ENCODE measurements at regions of chr14 and their contacts with region 1.

Region 1: DNA sequence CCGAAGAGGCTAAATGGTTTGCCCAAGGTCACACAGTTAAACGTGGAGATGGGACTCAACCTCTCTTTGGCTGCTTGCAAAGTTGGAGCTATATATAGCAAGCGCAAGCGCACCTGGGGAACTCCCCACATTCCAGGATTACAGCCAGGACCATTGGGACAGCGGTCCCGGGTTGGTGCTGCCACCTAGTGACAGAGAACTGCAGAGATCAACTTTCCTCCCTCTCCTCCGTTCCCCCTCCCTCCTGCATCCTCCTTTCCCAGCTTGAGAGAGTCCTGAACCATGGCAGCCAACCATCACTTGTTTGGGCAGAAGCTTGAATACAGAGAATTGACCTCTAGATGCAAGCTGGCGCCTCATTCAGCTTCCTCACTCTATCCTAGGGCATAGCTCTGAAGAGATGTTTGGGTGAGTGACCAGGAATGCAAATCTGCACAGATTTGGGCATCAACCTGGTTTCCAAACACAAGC is 17.4 kb upstream of the FLVCR2 start:
- DNase-seq: peak in 11 of 14 experiments; percentile 19 to 76 (median 38)
- ATAC-seq: peak; percentile 56
- H3K4me3 ChIP-seq: no peak overlapping the region
- H3K4me3 Mint-ChIP-seq: no peak overlapping the region
- H3K27ac ChIP-seq: no peak overlapping the region
- H3K27ac Mint-ChIP-seq: peak overlapping the region; percentile 28
- H3K4me1 ChIP-seq: peaks cover 26% of the 10 kb centered on the region
- H3K4me1 Mint-ChIP-seq: peaks cover 39% of the 10 kb centered on the region
- H3K27me3 ChIP-seq: no peaks in the 10 kb centered on the region
- H3K27me3 Mint-ChIP-seq: no peaks in the 10 kb centered on the region
- CTCF ChIP-seq: peak; percentile 96

Region 2: DNA sequence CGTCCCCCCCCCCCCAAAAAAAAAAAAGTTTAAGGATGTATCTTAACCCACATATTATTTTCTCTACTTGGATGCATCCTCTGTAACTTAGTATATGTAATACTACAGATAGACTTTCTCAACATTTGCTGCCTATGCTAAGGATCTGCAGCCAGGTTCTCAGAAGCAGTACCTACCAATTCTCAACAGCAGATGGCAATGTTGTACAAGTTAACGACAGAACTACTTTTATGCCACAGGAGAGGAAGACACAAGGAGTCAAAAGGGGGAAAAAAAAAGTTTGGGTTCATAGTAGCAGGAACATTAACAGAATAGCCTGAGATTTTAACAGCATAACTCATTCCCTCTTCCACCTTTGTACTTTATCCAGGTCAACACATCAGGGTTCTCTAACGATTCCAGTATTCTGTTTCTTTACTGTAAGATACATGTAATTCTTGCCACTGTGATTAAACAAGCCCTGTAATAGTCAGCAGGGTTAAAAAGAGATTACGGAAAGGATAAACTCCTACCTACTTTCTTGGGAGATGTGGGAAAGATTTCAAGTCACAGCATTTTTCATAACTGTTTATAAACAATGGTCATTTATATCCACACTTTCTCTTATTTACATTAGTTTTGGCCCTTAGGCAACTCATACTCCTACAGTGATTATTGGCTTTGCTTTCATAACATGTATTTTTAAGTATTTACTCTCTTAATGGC is 428.5 kb before region 1 on chr14:
- CTCF ChIA-PET with region 1: no interaction called
- POLR2A ChIA-PET with region 1: no interaction called
- intact Hi-C with region 1: loop called in 1 of 2 experiments (anchors 5 kb)
- DNase-seq: peak in 9 of 14 experiments; percentile 6 to 87 (median 46)
- ATAC-seq: peak; percentile 95
- H3K4me3 ChIP-seq: no peak overlapping the region
- H3K4me3 Mint-ChIP-seq: no peak overlapping the region
- H3K27ac ChIP-seq: no peak overlapping the region
- H3K27ac Mint-ChIP-seq: peak overlapping the region; percentile 2
- H3K4me1 ChIP-seq: peaks cover 10% of the 10 kb centered on the region
- H3K4me1 Mint-ChIP-seq: peaks cover 15% of the 10 kb centered on the region
- H3K27me3 ChIP-seq: no peaks in the 10 kb centered on the region
- H3K27me3 Mint-ChIP-seq: no peaks in the 10 kb centered on the region
- CTCF ChIP-seq: peak; percentile 73

Region 3: GRCh38 chr14:75487155-75487671 is 73.8 kb before region 1 on chr14:
- CTCF ChIA-PET with region 1: interaction called, 7 read pairs
- POLR2A ChIA-PET with region 1: no interaction called
- intact Hi-C with region 1: loop called in 1 of 2 experiments (anchors 1 kb)
- DNase-seq: peak in 4 of 14 experiments; percentile 8 to 56 (median 36)
- ATAC-seq: peak; percentile 30
- H3K4me3 ChIP-seq: no peak overlapping the region
- H3K4me3 Mint-ChIP-seq: no peak overlapping the region
- H3K27ac ChIP-seq: no peak overlapping the region
- H3K27ac Mint-ChIP-seq: no peak overlapping the region
- H3K4me1 ChIP-seq: peaks cover 13% of the 10 kb centered on the region
- H3K4me1 Mint-ChIP-seq: peaks cover 13% of the 10 kb centered on the region
- H3K27me3 ChIP-seq: no peaks in the 10 kb centered on the region
- H3K27me3 Mint-ChIP-seq: no peaks in the 10 kb centered on the region
- CTCF ChIP-seq: no peak

Region 4: DNA sequence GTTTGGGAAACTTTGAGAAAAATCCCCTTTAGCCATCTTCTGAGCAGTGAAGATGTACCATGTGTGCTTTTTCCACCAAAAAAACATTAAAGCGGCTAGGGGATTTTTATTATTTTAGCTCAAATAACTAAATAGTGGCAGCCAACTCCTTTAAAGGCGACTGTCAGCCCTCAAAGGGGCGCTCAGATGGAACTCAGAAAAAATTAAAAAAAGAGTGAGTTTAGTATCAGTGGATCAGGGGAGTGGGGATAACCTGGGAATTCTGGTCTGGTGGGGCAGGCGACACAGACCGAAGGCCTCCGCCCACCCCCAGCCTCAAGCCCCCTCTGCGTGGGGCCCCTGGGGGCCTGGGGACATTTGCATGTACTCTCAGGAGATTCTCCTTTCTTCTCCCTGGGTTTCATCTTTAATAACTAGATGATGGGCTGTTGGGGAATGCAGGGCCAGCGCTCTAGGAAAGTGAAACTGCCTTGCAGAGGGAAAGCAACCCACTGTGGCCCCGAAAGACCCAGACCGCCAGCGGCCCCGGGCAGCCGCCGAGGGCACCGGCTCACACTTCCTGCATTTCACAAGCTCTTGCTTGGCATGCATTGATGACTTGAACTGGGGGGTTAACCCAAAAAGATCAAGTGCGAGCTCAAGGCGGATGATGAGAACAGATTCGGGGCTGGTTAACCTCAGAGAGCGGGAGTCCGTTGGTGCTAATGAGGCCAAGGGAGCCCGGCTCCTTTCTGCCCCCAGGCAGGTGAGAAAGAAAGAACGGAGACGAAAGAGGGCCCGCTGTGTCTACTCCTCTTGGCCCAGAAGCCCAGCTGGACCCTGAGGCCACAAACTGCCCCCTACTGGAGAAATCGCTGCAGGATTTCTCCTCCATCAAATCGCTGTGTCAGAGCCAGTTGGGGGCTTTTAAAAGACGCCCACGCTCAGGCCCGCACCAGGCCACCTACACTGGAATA is 46.0 kb before region 1 on chr14:
- CTCF ChIA-PET with region 1: interaction called, 18 read pairs
- POLR2A ChIA-PET with region 1: interaction called, 3 read pairs
- intact Hi-C with region 1: loop called (anchors 1 to 2 kb)
- DNase-seq: peak; percentile 20 to 80 (median 41)
- ATAC-seq: peak; percentile 77
- H3K4me3 ChIP-seq: peak overlapping the region; percentile 54
- H3K4me3 Mint-ChIP-seq: peak overlapping the region; percentile 89
- H3K27ac ChIP-seq: peak overlapping the region; percentile 29 to 67
- H3K27ac Mint-ChIP-seq: peak overlapping the region; percentile 72
- H3K4me1 ChIP-seq: peaks cover 38% of the 10 kb centered on the region
- H3K4me1 Mint-ChIP-seq: peaks cover 49% of the 10 kb centered on the region
- H3K27me3 ChIP-seq: no peaks in the 10 kb centered on the region
- H3K27me3 Mint-ChIP-seq: no peaks in the 10 kb centered on the region
- CTCF ChIP-seq: no peak

Region 5: GRCh38 chr14:75597149-75597548 is 36.2 kb after region 1 on chr14:
- CTCF ChIA-PET with region 1: no interaction called
- POLR2A ChIA-PET with region 1: no interaction called
- intact Hi-C with region 1: no loop called
- DNase-seq: peak in 1 of 14 experiments; percentile 6
- ATAC-seq: no peak
- H3K4me3 ChIP-seq: no peak overlapping the region
- H3K4me3 Mint-ChIP-seq: no peak overlapping the region
- H3K27ac ChIP-seq: no peak overlapping the region
- H3K27ac Mint-ChIP-seq: no peak overlapping the region
- H3K4me1 ChIP-seq: no peaks in the 10 kb centered on the region
- H3K4me1 Mint-ChIP-seq: no peaks in the 10 kb centered on the region
- H3K27me3 ChIP-seq: no peaks in the 10 kb centered on the region
- H3K27me3 Mint-ChIP-seq: no peaks in the 10 kb centered on the region
- CTCF ChIP-seq: no peak

Region 6: DNA sequence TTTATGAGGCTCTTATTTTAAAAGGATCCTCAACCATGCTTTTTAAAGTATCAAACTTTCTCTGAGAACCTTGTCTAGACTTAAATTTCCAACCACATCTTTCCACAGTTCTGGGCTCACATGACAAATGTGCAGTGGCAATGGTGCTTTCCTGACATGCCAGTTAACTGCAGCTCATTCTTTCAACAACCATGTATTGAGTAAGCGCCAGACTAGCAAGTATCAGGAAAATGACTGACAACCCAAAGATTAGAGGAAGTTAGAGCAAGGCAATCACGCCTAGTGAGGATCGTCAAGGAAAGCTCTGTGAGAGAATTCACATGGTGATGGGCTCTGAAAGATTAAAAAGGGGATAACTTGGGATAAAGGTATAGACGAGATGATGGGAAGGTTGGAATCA is 53.2 kb after region 1 on chr14:
- CTCF ChIA-PET with region 1: no interaction called
- POLR2A ChIA-PET with region 1: no interaction called
- intact Hi-C with region 1: no loop called
- DNase-seq: peak in 2 of 14 experiments; percentile 49 to 59
- ATAC-seq: no peak
- H3K4me3 ChIP-seq: no peak overlapping the region
- H3K4me3 Mint-ChIP-seq: no peak overlapping the region
- H3K27ac ChIP-seq: no peak overlapping the region
- H3K27ac Mint-ChIP-seq: no peak overlapping the region
- H3K4me1 ChIP-seq: no peaks in the 10 kb centered on the region
- H3K4me1 Mint-ChIP-seq: no peaks in the 10 kb centered on the region
- H3K27me3 ChIP-seq: no peaks in the 10 kb centered on the region
- H3K27me3 Mint-ChIP-seq: no peaks in the 10 kb centered on the region
- CTCF ChIP-seq: no peak

Measured in CD4-positive, alpha-beta T cell (primary cell).